CD8-positive, alpha-beta T cell (primary cell): ENCODE measurements at regions of chr12 and their contacts with region 1.

Region 1: GRCh38 chr12:21451529-21451928 is 14.1 kb downstream of the PYROXD1 start:
- DNase-seq: no peak
- ATAC-seq: no peak
- H3K4me3 ChIP-seq: no peak overlapping the region
- H3K4me3 Mint-ChIP-seq: no peak overlapping the region
- H3K27ac ChIP-seq: no peak overlapping the region
- H3K27ac Mint-ChIP-seq: peak overlapping the region; percentile 33
- H3K4me1 ChIP-seq: peaks cover 11% of the 10 kb centered on the region
- H3K4me1 Mint-ChIP-seq: peaks cover 28% of the 10 kb centered on the region
- H3K27me3 ChIP-seq: no peaks in the 10 kb centered on the region
- H3K27me3 Mint-ChIP-seq: no peaks in the 10 kb centered on the region
- CTCF ChIP-seq: no peak

Region 2: DNA sequence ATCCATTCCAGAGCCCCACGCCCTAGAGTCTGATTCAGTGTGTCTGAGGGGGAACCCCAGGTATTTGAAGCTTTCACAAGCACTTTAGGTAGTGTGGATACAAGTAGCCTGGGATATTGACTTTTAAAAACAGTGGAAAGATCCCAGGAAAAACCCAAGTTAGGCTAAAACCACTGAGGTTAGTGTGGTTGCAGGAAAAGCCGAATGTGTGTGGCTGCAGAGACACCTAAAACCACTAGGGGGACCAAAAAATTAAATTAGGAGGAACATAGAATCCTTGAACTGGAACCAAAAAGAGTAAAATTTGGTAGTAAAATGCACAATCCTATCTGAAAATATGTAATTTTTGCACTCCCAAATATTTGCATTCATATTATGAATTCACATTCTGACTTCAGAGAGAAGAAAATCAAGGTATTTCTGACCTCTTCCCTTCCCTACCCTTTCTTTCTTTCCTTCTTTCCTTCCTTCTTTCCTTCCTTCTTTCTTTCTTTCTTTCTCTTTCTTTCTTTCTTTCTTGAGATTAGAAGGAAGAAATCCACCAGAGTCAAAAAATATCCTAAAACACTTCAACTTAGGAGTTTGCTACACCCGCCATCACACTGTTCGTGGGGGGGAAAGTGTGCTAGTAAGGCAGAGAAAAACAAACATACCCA is 154.7 kb before region 1 on chr12:
- CTCF ChIA-PET with region 1: no interaction called
- POLR2A ChIA-PET with region 1: no interaction called
- intact Hi-C with region 1: loop called in 1 of 2 experiments (anchors 5 kb)
- DNase-seq: peak in 2 of 9 experiments; percentile 10 to 29
- ATAC-seq: no peak
- H3K4me3 ChIP-seq: no peak overlapping the region
- H3K4me3 Mint-ChIP-seq: no peak overlapping the region
- H3K27ac ChIP-seq: no peak overlapping the region
- H3K27ac Mint-ChIP-seq: no peak overlapping the region
- H3K4me1 ChIP-seq: no peaks in the 10 kb centered on the region
- H3K4me1 Mint-ChIP-seq: peaks cover 2% of the 10 kb centered on the region
- H3K27me3 ChIP-seq: no peaks in the 10 kb centered on the region
- H3K27me3 Mint-ChIP-seq: peaks cover 3% of the 10 kb centered on the region
- CTCF ChIP-seq: peak; percentile 71

Region 3: GRCh38 chr12:21476949-21477348 is 25.4 kb after region 1 on chr12:
- CTCF ChIA-PET with region 1: no interaction called
- POLR2A ChIA-PET with region 1: no interaction called
- intact Hi-C with region 1: loop called in 1 of 2 experiments (anchors 2 kb)
- DNase-seq: no peak
- ATAC-seq: no peak
- H3K4me3 ChIP-seq: no peak overlapping the region
- H3K4me3 Mint-ChIP-seq: no peak overlapping the region
- H3K27ac ChIP-seq: no peak overlapping the region
- H3K27ac Mint-ChIP-seq: no peak overlapping the region
- H3K4me1 ChIP-seq: no peaks in the 10 kb centered on the region
- H3K4me1 Mint-ChIP-seq: peaks cover 3% of the 10 kb centered on the region
- H3K27me3 ChIP-seq: no peaks in the 10 kb centered on the region
- H3K27me3 Mint-ChIP-seq: no peaks in the 10 kb centered on the region
- CTCF ChIP-seq: no peak

Region 4: GRCh38 chr12:21501379-21501956 is 49.9 kb after region 1 on chr12 and contains the starts of genes GOLT1B and RECQL:
- CTCF ChIA-PET with region 1: no interaction called
- POLR2A ChIA-PET with region 1: no interaction called
- intact Hi-C with region 1: loop called (anchors 1 to 5 kb)
- DNase-seq: peak; percentile 74 to 98 (median 88)
- ATAC-seq: peak; percentile 94
- H3K4me3 ChIP-seq: peak within 1 kb of the TSS; percentile 89 to 95
- H3K4me3 Mint-ChIP-seq: no peak within 1 kb of the TSS
- H3K27ac ChIP-seq: peak within 1 kb of the TSS; percentile 83 to 84
- H3K27ac Mint-ChIP-seq: no peak within 1 kb of the TSS
- H3K4me1 ChIP-seq: peaks cover 35% of the 10 kb centered on the region
- H3K4me1 Mint-ChIP-seq: peaks cover 60% of the 10 kb centered on the region
- H3K27me3 ChIP-seq: no peaks in the 10 kb centered on the region
- H3K27me3 Mint-ChIP-seq: no peaks in the 10 kb centered on the region
- CTCF ChIP-seq: no peak
- total RNA-seq, gene GOLT1B: 45.2 to 52.9 TPM
- total RNA-seq, gene RECQL: 9.9 to 14.6 TPM

Region 5: GRCh38 chr12:21571046-21571445 is 119.5 kb after region 1 on chr12:
- CTCF ChIA-PET with region 1: no interaction called
- POLR2A ChIA-PET with region 1: no interaction called
- intact Hi-C with region 1: no loop called
- DNase-seq: no peak
- ATAC-seq: no peak
- H3K4me3 ChIP-seq: no peak overlapping the region
- H3K4me3 Mint-ChIP-seq: no peak overlapping the region
- H3K27ac ChIP-seq: no peak overlapping the region
- H3K27ac Mint-ChIP-seq: no peak overlapping the region
- H3K4me1 ChIP-seq: no peaks in the 10 kb centered on the region
- H3K4me1 Mint-ChIP-seq: no peaks in the 10 kb centered on the region
- H3K27me3 ChIP-seq: no peaks in the 10 kb centered on the region
- H3K27me3 Mint-ChIP-seq: no peaks in the 10 kb centered on the region
- CTCF ChIP-seq: no peak

Region 6: GRCh38 chr12:21613931-21614330 is 162.4 kb after region 1 on chr12:
- CTCF ChIA-PET with region 1: no interaction called
- POLR2A ChIA-PET with region 1: no interaction called
- intact Hi-C with region 1: loop called in 1 of 2 experiments (anchors 10 kb)
- DNase-seq: no peak
- ATAC-seq: no peak
- H3K4me3 ChIP-seq: peak overlapping the region in 1 of 2 experiments; percentile 19
- H3K4me3 Mint-ChIP-seq: peak overlapping the region; percentile 29
- H3K27ac ChIP-seq: peak overlapping the region; percentile 32 to 68
- H3K27ac Mint-ChIP-seq: peak overlapping the region; percentile 92
- H3K4me1 ChIP-seq: peaks cover 54% of the 10 kb centered on the region
- H3K4me1 Mint-ChIP-seq: peaks cover 58% of the 10 kb centered on the region
- H3K27me3 ChIP-seq: no peaks in the 10 kb centered on the region
- H3K27me3 Mint-ChIP-seq: no peaks in the 10 kb centered on the region
- CTCF ChIP-seq: no peak

Region 7: DNA sequence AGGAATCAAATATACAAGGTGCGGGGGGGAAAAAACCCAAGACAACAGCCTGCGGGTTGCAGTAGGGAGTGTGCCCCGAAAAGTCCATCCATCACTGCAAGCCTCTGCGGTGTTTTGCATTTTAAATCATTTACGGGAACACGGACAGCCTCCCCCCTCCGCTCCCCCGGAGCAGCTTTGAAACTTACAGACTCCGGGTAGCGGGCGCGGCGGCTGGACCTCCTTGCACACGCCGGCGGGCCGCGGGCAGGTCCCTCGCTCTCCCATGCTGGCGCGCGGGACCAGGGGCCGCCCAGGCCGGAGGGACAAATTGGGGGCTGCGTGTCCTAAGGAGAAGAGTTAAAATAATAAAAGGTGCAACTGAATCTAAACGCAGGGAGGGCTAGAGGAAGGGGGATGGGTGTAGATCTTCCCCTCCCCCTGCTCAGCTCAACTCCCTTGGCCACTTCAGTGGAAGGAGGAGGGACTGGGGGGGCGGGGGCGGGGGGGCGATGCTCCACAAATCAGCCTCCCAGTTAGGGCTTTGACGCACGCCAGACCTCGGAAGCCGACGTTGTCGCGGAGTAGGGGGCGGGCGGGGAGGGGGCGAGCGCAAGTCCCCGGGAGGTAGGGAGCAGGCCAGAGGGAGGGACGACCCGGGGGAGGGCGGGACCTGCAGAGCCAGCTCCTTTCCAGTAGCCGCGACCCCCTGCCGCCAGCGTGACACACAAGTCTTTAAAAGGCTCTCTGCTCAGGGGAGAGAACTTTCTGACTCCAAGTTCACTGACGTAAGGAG is 323.0 kb after region 1 on chr12 and contains the start of gene KCNJ8:
- CTCF ChIA-PET with region 1: no interaction called
- POLR2A ChIA-PET with region 1: no interaction called
- intact Hi-C with region 1: no loop called
- DNase-seq: peak in 2 of 9 experiments; percentile 5 to 9
- ATAC-seq: peak; percentile 17
- H3K4me3 ChIP-seq: no peak within 1 kb of the TSS
- H3K4me3 Mint-ChIP-seq: peak within 1 kb of the TSS; percentile 63
- H3K27ac ChIP-seq: no peak within 1 kb of the TSS
- H3K27ac Mint-ChIP-seq: no peak within 1 kb of the TSS
- H3K4me1 ChIP-seq: peaks cover 6% of the 10 kb centered on the region
- H3K4me1 Mint-ChIP-seq: peaks cover 15% of the 10 kb centered on the region
- H3K27me3 ChIP-seq: peaks cover 7 to 9% of the 10 kb centered on the region in 2 experiments
- H3K27me3 Mint-ChIP-seq: peaks cover 45% of the 10 kb centered on the region
- CTCF ChIP-seq: no peak
- total RNA-seq, gene KCNJ8: not detected